Dendritic cell treated with granulocyte-macrophage colony-stimulating factor and Interleukin-4, amounts not matched to agents 40 ng/mL and 50 ng/mL, for 4 days (primary cell): ENCODE measurements at regions of chr14 and their contacts with region 1.

Region 1: GRCh38 chr14:58637391-58638230 is at the start of gene DACT1:
- H3K4me3 Mint-ChIP-seq: peak within 1 kb of the TSS; percentile 80
- H3K27ac Mint-ChIP-seq: peak within 1 kb of the TSS; percentile 39
- H3K4me1 Mint-ChIP-seq: peaks cover 27% of the 10 kb centered on the region
- H3K27me3 Mint-ChIP-seq: peaks cover 41% of the 10 kb centered on the region

Region 2: DNA sequence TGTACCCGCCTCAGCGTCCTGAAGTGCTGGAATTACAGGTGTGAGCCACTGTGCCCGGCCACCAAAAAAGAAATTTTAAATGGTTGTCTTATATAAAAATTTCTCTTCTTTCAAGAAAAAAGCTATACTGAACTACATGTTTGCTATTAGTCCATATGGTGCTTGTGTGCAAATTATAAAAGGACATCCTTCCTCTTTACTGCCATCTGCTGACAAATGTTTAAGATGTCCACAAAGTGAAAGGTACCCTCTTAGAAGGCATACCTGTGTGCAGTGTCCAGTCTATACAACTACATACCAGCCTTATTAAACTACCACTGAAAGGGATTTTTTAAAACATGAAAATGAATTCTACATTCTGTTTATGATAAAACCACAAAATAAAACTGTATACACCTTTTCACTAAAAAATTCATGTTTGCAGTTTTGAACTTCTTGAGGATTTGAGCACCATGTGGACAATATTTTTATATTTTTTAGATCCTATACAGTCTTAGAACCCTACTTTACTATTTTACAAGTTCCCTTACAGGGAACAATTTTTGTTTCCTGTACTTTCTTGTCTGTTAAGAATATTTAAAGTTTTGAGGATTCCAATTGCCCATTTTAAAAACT is 274.7 kb before region 1 on chr14:
- intact Hi-C with region 1: no loop called
- H3K4me3 Mint-ChIP-seq: no peak overlapping the region
- H3K27ac Mint-ChIP-seq: no peak overlapping the region
- H3K4me1 Mint-ChIP-seq: peaks cover 9% of the 10 kb centered on the region
- H3K27me3 Mint-ChIP-seq: no peaks in the 10 kb centered on the region

Region 3: DNA sequence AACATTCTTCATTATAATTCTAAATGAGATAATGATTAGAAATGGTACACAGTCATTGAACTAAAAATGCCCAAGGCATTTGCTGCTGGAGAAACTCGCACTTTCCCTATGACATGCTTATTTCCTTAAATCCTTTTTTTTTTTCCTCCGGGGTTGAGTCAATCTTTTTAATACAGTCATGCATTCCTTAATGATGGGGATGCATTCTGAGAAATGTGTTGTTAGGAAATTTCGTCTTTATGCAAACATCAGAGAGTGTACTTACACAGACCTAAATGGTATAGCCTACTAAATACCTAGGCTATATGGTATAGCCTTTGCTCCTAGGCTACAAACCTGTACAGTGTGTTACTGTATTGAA is 29.7 kb before region 1 on chr14:
- intact Hi-C with region 1: no loop called
- H3K4me3 Mint-ChIP-seq: no peak overlapping the region
- H3K27ac Mint-ChIP-seq: no peak overlapping the region
- H3K4me1 Mint-ChIP-seq: no peaks in the 10 kb centered on the region
- H3K27me3 Mint-ChIP-seq: no peaks in the 10 kb centered on the region

Region 4: GRCh38 chr14:58749066-58749669 is 111.6 kb after region 1 on chr14:
- intact Hi-C with region 1: loop called (anchors 5 kb)
- H3K4me3 Mint-ChIP-seq: peak overlapping the region; percentile 60
- H3K27ac Mint-ChIP-seq: peak overlapping the region; percentile 92
- H3K4me1 Mint-ChIP-seq: peaks cover 82% of the 10 kb centered on the region
- H3K27me3 Mint-ChIP-seq: no peaks in the 10 kb centered on the region

Region 5: GRCh38 chr14:58826845-58827686 is 189.5 kb after region 1 on chr14:
- intact Hi-C with region 1: loop called (anchors 5 kb)
- H3K4me3 Mint-ChIP-seq: no peak overlapping the region
- H3K27ac Mint-ChIP-seq: no peak overlapping the region
- H3K4me1 Mint-ChIP-seq: peaks cover 5% of the 10 kb centered on the region
- H3K27me3 Mint-ChIP-seq: no peaks in the 10 kb centered on the region

Region 6: GRCh38 chr14:59055439-59056045 is 417.9 kb after region 1 on chr14:
- intact Hi-C with region 1: loop called (anchors 10 kb)
- H3K4me3 Mint-ChIP-seq: no peak overlapping the region
- H3K27ac Mint-ChIP-seq: no peak overlapping the region
- H3K4me1 Mint-ChIP-seq: no peaks in the 10 kb centered on the region
- H3K27me3 Mint-ChIP-seq: no peaks in the 10 kb centered on the region